ENCODE measurements at regions of chr9 and their contacts with region 1.

Region 1: DNA sequence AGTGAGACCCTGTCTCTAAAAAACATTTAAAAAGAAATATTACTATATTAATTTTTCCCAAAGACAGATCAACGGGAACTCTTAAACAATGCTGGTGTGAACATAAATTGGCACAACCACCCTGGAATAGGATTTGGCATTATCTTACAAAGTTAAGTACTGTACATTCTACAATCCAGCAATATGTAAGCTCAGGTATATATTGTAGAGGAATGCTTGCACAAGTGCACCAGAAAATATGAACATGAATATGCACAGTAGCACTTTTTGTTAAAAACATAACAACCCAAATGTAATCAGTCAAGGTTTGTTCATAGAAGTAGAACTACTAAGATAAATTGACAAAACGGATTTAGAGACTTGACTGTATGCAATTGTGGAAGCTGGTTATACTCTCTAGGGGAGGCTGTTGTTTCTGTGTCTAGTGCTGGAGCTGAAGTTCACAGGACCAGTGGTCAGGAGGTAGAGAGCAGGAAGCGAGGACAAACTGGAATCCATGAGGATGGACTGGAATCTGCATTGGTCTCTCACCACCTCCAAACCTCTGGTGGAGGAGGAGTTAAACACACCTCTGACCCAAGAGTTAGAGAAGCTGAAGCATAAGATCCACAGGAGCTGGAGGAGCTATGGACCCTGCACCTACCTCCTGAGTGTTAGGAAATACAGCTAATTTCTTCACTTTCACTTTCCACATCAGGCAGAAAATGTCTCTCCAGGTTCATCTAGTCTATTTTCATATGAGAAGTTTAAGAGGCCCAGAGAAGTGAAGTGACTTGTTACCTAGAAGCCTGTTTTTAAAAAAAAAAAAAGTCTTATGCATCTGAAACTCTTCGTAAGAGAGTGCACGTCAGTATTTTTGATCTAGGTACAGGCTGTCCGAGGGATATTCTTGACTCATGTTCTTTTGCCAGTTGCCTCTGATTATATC is 20.3 kb upstream of the RIC1 start:
- DNase-seq: peak in 2 of 4 experiments; percentile 9 to 16
- ATAC-seq: peak; percentile 91
- H3K4me3 ChIP-seq: peak overlapping the region; percentile 30
- H3K27ac ChIP-seq: peak overlapping the region; percentile 2; the same call in 1 of the 3 replicates
- H3K4me1 ChIP-seq: no peaks in the 10 kb centered on the region
- H3K27me3 ChIP-seq: no peaks in the 10 kb centered on the region
- CTCF ChIP-seq: peak in 1 of 3 experiments; percentile 30; a peak in 1 of 6 replicates
- EP300 ChIP-seq: no peak
- POLR2A ChIP-seq: no peak
- RAD21 ChIP-seq: peak in 1 of 2 experiments; percentile 32; a peak in 1 of 4 replicates

Region 2: DNA sequence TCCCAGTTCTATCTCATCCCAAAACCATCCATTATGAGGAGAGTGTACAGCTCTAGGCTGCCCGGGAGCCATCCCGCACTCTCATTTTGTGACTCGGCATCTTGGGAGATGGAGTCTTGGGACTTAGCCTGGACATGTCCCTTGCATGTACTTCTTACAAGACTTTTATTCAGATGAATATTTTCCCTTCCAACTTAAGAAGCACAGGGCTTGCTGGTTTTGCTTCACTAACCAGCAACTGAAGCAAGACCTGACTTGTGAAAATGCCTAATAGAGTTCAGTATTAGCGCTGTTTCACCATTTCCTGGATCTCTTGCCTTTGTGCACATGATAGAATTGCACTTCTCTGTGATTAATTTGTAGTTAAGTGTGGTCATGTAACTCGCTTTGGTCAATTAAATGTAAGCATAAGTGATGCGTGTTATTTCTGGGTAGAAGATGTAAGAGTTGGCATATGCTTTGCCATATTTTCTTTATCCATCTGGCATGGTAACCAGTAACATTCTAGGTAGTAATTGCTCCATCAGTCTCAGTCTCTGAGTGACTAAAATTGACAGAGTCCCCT is 42.4 kb before region 1 on chr9:
- CTCF ChIA-PET with region 1: no interaction called
- POLR2A ChIA-PET with region 1: no interaction called
- in situ Hi-C with region 1: no loop called
- intact Hi-C with region 1: no loop called
- DNase-seq: no peak
- ATAC-seq: no peak
- H3K4me3 ChIP-seq: no peak overlapping the region
- H3K27ac ChIP-seq: no peak overlapping the region
- H3K4me1 ChIP-seq: 0 out of 5 replicates have a peak, but pooled peaks cover 0 to 6% of the 10 kb centered on the region in 2 experiments
- H3K27me3 ChIP-seq: no peaks in the 10 kb centered on the region
- CTCF ChIP-seq: no peak
- EP300 ChIP-seq: no peak
- POLR2A ChIP-seq: no peak
- RAD21 ChIP-seq: no peak

Region 3: DNA sequence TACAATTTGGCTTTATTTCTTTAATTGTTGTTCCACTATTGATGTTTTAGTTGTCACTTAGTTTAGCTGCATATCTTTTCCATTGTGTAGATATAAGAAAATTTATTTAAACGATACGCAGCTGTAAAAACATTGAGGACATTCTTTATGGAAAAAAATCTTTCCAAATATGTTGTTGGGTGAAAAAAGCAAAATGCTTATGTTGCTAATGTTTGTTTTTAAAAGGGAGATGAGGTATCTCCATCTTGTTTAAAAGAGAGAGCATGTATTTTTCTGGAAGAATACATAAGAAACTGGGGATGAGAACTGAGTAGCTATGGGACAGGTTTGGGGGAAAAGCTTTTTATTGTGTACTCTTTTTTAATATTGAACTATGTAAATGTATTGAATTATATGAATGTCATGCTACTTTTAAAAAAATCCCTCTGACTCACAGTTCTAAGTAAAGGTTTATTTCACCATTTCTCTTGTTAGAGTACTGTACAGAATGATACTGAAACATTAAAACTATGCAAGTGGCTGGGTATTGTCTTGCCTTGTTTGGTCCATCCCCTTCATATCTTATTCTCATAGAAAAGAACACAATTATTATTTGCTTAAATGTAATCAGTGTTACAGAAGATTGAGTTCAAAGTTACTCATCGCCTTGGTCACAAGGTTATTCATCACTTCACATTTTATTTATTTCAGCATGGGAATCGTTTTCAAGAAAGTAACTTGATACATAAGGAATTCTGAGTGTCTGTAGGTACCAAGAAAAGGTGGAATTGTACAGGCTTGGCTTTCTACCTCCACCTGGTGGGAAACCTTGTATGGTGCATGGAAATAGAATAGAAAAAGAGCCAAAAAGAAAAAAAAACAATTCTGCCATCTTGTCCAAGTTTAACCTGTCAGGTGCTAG is 106.2 kb after region 1 on chr9:
- CTCF ChIA-PET with region 1: no interaction called
- POLR2A ChIA-PET with region 1: no interaction called
- in situ Hi-C with region 1: no loop called
- intact Hi-C with region 1: loop called (anchors 10 kb)
- DNase-seq: peak in 3 of 4 experiments; percentile 4 to 17 (median 7)
- ATAC-seq: no peak
- H3K4me3 ChIP-seq: no peak overlapping the region
- H3K27ac ChIP-seq: no peak overlapping the region
- H3K4me1 ChIP-seq: no peaks in the 10 kb centered on the region
- H3K27me3 ChIP-seq: no peaks in the 10 kb centered on the region
- CTCF ChIP-seq: peak; percentile 16 to 41 (median 20); a peak in 3 of 6 replicates
- EP300 ChIP-seq: no peak
- POLR2A ChIP-seq: no peak
- RAD21 ChIP-seq: peak in 1 of 2 experiments; percentile 55; a peak in 2 of 4 replicates